Dorsolateral prefrontal cortex (tissue), 120 donors: ENCODE measurements at regions of chr1 and their contacts with region 1.

Region 1: GRCh38 chr1:22105611-22106207 is 37.2 kb downstream of the WNT4 start:
- DNase-seq: peak in 1 of 10 donors; percentile 21
- H3K4me3 ChIP-seq: no peak overlapping the region
- H3K27ac ChIP-seq: peak overlapping the region in 3 of 59 donors; percentile 29 to 53 (median 52)
- H3K27me3 ChIP-seq: no peaks in the 10 kb centered on the region
- CTCF ChIP-seq: peak; percentile 66 to 91 (median 84)

Region 2: GRCh38 chr1:22143065-22144036 is 37.6 kb after region 1 on chr1 and contains the start of gene WNT4:
- intact Hi-C with region 1: loop called in 1 of 2 experiments (anchors 5 kb)
- DNase-seq: peak in 1 of 10 donors; percentile 57
- H3K4me3 ChIP-seq: peak within 1 kb of the TSS; percentile 35 to 75 (median 59)
- H3K27ac ChIP-seq: peak within 1 kb of the TSS in 4 of 59 donors; percentile 2 to 44 (median 10)
- H3K27me3 ChIP-seq: peaks cover 0 to 21% (median 0%) of the 10 kb centered on the region in 45 donors
- CTCF ChIP-seq: peak in 26 of 56 donors; percentile 11 to 62 (median 33)
- total RNA-seq, gene WNT4: 0.50 to 4.2 (median 1.5) TPM

Region 3: GRCh38 chr1:22239378-22239777 is 133.7 kb after region 1 on chr1:
- intact Hi-C with region 1: no loop called
- DNase-seq: no peak
- H3K4me3 ChIP-seq: no peak overlapping the region
- H3K27ac ChIP-seq: no peak overlapping the region
- H3K27me3 ChIP-seq: peaks cover 0 to 16% (median 0%) of the 10 kb centered on the region in 45 donors
- CTCF ChIP-seq: no peak

Region 4: DNA sequence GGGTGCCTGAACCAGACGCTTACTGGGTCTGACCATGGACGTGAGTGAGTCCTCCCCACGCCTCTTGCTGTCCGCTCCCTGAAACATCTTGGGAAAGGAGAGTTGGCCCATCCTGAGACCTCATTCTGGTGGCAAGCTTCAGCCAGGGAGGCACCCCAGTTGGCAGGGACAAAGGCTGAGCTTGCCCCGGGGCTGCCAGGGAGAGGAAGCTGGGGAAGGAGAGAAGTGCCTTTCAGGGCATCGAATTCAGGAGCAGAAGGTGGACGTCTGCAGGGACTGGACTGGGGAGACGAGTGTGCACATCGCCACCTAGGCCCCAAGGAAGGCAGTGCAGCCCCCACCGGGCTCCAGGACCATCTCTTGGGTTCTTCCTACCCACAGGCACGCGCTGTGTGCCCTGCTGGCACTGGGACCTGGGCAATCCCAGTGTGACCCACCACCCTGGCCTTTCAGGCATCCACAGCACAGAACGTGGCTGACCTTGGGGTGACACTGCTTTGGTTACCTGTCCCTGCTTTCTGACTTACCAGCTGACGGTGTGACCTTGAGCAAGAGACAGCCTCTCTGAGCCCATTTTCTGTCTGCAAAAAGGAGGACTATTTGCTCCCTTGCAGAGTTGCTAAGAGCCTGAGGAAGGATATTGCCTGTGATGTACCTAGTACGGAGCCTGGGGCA is 170.1 kb after region 1 on chr1:
- intact Hi-C with region 1: loop called (anchors 2 to 5 kb)
- DNase-seq: peak in 8 of 10 donors; percentile 9 to 68 (median 39)
- H3K4me3 ChIP-seq: no peak overlapping the region
- H3K27ac ChIP-seq: no peak overlapping the region
- H3K27me3 ChIP-seq: peaks cover 0 to 8% (median 0%) of the 10 kb centered on the region in 45 donors
- CTCF ChIP-seq: peak in 54 of 56 donors; percentile 31 to 79 (median 67)

Region 5: GRCh38 chr1:22416555-22417454 is 311.1 kb after region 1 on chr1:
- intact Hi-C with region 1: loop called (anchors 2 to 5 kb)
- DNase-seq: peak; percentile 28 to 83 (median 70)
- H3K4me3 ChIP-seq: peak overlapping the region in 7 of 59 donors; percentile 3 to 26 (median 18)
- H3K27ac ChIP-seq: no peak overlapping the region
- H3K27me3 ChIP-seq: peaks cover 0 to 9% (median 0%) of the 10 kb centered on the region in 45 donors
- CTCF ChIP-seq: peak; percentile 54 to 95 (median 88)